Gastrocnemius medialis (tissue), 4 donors: ENCODE measurements at regions of chr9 and their contacts with region 1.

Region 1: GRCh38 chr9:23412458-23412857 is 413.6 kb downstream of the ELAVL2 start:
- DNase-seq: no peak
- ATAC-seq: no peak
- H3K4me3 ChIP-seq: no peak overlapping the region
- H3K27ac ChIP-seq: no peak overlapping the region
- H3K4me1 ChIP-seq: no peaks in the 10 kb centered on the region
- H3K27me3 ChIP-seq: no peaks in the 10 kb centered on the region
- CTCF ChIP-seq: no peak
- POLR2A ChIP-seq: no peak

Region 2: GRCh38 chr9:23524607-23525155 is 112.2 kb after region 1 on chr9:
- in situ Hi-C with region 1: loop called in 1 of 4 experiments (anchors 25 kb)
- intact Hi-C with region 1: no loop called
- DNase-seq: no peak
- ATAC-seq: no peak
- H3K4me3 ChIP-seq: no peak overlapping the region
- H3K27ac ChIP-seq: no peak overlapping the region
- H3K4me1 ChIP-seq: no peaks in the 10 kb centered on the region
- H3K27me3 ChIP-seq: no peaks in the 10 kb centered on the region
- CTCF ChIP-seq: no peak
- POLR2A ChIP-seq: no peak